Ovary (tissue), 10 donors: ENCODE measurements at regions of chr7 and their contacts with region 1.

Region 1: GRCh38 chr7:2985866-2986265 is 57.8 kb downstream of the CARD11 start:
- DNase-seq: no peak
- H3K4me3 ChIP-seq: no peak overlapping the region
- H3K27ac ChIP-seq: no peak overlapping the region
- H3K4me1 ChIP-seq: no peaks in the 10 kb centered on the region
- H3K27me3 ChIP-seq: no peaks in the 10 kb centered on the region
- CTCF ChIP-seq: no peak
- EP300 ChIP-seq: no peak
- POLR2A ChIP-seq: no peak

Region 2: DNA sequence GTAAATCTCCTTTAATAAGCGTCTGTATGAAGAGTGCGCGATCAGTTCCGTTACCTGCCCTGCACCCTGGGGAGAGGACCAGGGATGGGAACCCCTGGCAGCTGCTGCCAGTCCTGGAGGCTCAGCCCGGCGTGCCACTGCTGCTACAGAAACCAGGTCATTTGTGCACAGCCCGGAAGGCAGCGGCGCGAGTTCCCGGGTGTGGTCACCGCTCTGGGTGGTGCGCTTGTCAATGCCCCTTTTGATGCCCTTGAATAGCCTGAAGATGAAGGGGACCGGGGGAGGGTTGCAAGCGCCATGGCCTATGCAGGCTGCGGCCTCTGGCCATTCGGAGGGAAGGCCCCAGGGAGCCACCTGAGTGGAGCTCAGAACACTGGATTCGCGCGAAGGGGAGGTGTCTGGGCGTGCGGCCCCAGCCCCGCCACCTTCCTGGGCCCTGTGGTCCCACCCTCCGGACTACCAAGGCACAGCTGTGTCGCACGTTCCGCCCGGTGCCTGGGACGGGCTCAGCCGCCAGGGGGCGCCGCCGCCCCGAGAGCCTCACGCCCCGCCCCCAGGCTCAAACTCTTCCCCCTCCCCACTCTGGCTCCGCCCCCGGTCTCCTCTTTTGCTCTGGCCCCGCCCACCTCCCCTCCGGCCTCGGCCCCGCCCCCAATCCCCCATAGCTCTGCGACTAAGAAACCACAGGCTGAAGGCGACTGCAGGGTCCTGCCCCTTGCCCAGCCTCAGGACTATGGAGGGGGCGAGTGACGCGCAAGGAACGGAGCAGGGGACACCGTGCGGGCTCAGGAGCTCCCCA is 1806.1 kb after region 1 on chr7:
- intact Hi-C with region 1: loop called in 1 of 4 experiments (anchors 5 kb)
- DNase-seq: peak; percentile 77 to 94 (median 88)
- H3K4me3 ChIP-seq: peak overlapping the region; percentile 34
- H3K27ac ChIP-seq: peak overlapping the region; percentile 21 to 48
- H3K4me1 ChIP-seq: peaks cover 1% of the 10 kb centered on the region
- H3K27me3 ChIP-seq: no peaks in the 10 kb centered on the region
- CTCF ChIP-seq: peak; percentile 40 to 100 (median 80)
- EP300 ChIP-seq: no peak
- POLR2A ChIP-seq: no peak